Head of caudate nucleus (tissue), 42 donors: ENCODE measurements at regions of chr18 and their contacts with region 1.

Region 1: DNA sequence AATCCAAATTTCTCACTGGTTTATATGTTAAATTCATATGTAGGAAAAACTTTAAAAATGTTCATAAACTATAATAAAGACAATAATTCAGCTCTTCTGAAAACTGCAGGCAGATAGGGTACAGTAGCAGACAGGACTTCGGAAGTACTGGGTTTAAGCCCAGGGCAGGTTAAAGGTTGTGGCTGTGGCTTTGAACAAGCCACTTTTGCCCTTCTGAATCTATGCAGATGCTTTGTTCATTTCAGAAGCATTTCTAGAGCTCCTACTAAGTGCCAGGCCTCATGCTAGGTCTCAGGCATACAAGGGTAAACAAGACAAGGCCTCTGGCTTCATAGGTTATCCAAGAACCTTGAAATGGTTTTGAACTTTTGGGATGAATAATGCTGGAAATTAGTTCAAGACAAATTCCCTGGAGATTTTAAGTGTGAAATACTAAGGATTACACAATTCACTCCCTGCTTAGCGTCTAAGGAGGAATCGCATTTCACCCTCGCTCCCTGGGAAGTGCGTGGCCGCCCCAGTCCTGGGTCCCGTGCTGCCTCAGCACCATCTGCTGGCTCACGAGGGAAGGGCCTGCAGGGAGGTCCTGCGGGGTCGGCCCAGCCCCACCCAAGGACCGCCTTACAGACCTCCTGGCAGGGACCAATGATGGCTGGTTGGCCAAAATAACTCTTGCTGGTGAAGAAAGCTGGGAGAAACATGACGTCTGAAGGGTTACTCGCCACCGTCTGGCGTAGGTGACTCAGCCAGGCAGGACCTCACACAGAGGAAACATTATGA is 67.7 kb upstream of the L3MBTL4 start:
- DNase-seq: peak in 39 of 42 donors; percentile 8 to 81 (median 52)

Region 2: DNA sequence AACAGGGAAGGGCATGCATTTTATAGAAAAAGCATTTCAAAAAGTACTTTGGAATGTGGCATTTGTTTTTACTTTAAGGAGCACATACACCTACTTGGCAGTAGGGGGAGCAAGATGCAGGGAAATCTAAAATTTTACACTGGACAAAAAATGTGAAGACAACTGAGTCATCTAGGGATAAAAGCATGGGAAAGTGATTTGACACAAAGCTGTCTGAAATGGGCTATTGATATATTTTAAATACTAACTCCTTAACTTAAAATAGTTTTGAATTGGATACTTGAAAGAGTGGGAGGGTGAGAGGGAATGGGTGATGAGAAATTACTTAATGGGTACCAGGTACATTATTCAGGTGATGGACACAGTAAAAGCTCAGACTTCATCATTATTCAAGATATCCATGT is 602.9 kb before region 1 on chr18:
- intact Hi-C with region 1: loop called (anchors 10 kb)
- DNase-seq: peak in 2 of 42 donors; percentile 6 to 42